ENCODE measurements at regions of chr6 and their contacts with region 1.

Region 1: DNA sequence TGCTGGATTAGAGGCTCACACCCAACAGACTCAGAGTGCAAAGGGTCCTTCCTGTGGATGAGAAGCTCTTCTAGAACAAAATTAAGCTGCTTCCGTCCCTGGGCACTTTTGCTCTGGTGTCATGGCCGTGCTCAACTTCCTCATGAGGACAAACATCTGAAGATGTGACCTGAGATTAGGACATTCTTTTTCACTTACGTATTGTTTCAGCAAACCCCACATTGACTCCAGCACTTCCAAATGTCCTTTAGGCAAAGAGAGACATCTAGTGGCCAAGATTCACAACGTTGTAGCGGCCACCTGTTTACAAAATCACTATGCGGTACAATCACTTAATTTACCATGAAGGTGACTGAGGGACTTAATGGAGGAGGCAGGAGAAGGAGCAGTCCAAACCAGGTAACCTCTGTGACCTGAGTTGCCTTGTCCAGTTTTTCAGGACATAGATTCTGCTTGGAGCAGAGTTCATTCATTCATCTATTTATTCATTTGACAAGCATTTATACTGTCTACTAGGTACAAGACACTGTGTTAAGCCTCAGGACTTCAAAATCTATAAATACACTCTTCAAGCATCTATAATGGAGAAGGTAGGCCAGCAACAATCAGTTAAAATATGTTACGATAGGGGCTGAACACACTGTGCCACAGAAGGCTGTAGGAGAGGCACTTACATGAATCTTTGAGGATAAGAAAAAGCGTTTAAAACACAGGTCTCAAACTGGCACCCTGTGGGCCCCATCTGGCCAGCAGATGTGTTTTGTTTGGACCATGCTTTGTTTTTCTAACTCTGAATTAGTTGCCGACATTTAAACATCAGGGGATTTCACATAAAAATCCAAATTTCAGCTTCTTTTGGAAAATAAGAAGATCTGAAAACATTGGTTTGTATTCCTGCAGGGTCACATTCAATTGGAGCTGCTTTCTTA is 5.6 kb upstream of the ADGRF1 start:
- DNase-seq: peak in 6 of 9 donors; percentile 0 to 19 (median 6)
- ATAC-seq: peak; percentile 56
- H3K4me3 ChIP-seq: no peak overlapping the region
- H3K4me3 Mint-ChIP-seq: no peak overlapping the region
- H3K27ac ChIP-seq: no peak overlapping the region
- H3K27ac Mint-ChIP-seq: no peak overlapping the region
- H3K4me1 ChIP-seq: no peaks in the 10 kb centered on the region
- H3K4me1 Mint-ChIP-seq: peaks cover 0 to 6% (median 0%) of the 10 kb centered on the region in 7 donors
- H3K27me3 ChIP-seq: no peaks in the 10 kb centered on the region
- H3K27me3 Mint-ChIP-seq: peaks cover 5 to 28% (median 11%) of the 10 kb centered on the region in 5 donors

Region 2: GRCh38 chr6:45930420-45931040 is 1117.2 kb before region 1 on chr6:
- CTCF ChIA-PET with region 1: no interaction called
- POLR2A ChIA-PET with region 1: no interaction called
- intact Hi-C with region 1: loop called in 1 of 2 experiments (anchors 10 kb)
- DNase-seq: peak in 8 of 9 donors; percentile 28 to 55 (median 43)
- ATAC-seq: peak; percentile 71
- H3K4me3 ChIP-seq: no peak overlapping the region
- H3K4me3 Mint-ChIP-seq: no peak overlapping the region
- H3K27ac ChIP-seq: no peak overlapping the region
- H3K27ac Mint-ChIP-seq: no peak overlapping the region
- H3K4me1 ChIP-seq: no peaks in the 10 kb centered on the region
- H3K4me1 Mint-ChIP-seq: peaks cover 0 to 5% (median 0%) of the 10 kb centered on the region in 7 donors
- H3K27me3 ChIP-seq: no peaks in the 10 kb centered on the region
- H3K27me3 Mint-ChIP-seq: peaks cover 0 to 5% (median 0%) of the 10 kb centered on the region in 5 donors

Region 3: DNA sequence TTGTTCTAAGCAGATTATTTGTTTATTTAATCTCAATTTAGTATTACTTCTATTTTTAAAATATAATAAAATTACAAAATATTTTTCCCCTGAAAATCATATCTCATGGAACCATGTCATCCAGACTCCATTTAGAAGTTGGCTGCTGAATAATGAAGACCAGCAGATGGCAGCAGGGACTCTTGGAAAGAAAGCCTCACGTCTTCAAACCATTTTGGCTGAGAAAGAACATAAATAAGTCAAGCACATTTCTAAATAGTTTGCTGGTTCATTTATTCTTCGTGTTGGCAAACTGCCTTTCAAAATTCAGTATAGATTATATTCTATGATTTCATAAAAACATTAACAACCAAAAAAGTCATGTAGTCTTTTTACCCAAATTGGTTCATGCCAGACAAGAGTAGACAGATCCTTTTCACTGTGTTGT is 628.2 kb before region 1 on chr6:
- CTCF ChIA-PET with region 1: no interaction called
- POLR2A ChIA-PET with region 1: no interaction called
- intact Hi-C with region 1: loop called in 1 of 2 experiments (anchors 5 kb)
- DNase-seq: peak in 1 of 9 donors; percentile 7
- ATAC-seq: no peak
- H3K4me3 ChIP-seq: no peak overlapping the region
- H3K4me3 Mint-ChIP-seq: no peak overlapping the region
- H3K27ac ChIP-seq: no peak overlapping the region
- H3K27ac Mint-ChIP-seq: no peak overlapping the region
- H3K4me1 ChIP-seq: no peaks in the 10 kb centered on the region
- H3K4me1 Mint-ChIP-seq: no peaks in the 10 kb centered on the region
- H3K27me3 ChIP-seq: no peaks in the 10 kb centered on the region
- H3K27me3 Mint-ChIP-seq: peaks cover 12 to 34% (median 18%) of the 10 kb centered on the region in 5 donors

Region 4: DNA sequence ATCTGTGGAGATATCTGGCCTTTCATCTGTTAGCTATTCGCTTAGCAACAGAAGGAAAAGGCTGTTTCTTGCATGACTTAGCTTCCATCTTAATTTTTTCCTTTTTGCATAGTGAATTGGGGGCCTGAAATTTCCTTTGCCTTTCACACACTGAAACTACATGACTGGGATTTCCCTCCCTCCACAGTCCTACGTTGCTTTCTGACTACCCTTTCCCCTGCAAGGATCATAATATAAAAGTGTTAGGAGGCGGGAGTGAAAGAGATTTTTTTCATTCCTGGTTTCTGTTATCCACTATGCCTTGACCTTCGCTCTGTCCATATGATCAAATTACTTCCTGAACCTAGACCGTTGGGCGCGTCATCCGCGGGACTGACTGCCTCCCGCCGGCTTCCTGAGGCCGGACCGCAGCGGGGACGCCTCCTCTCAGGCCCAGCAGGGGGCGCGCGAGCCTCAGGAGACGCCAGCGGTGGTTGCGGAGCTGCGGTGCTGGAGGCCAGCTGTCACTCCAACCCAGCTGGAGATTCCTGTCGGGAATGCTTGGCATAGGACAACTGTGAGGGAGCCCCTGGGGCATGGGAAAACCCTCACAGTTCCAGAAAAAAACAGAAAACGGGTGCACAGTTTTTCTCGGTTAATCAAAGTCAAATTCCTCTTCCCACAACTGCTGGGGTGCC is 198.9 kb before region 1 on chr6:
- CTCF ChIA-PET with region 1: no interaction called
- POLR2A ChIA-PET with region 1: no interaction called
- intact Hi-C with region 1: loop called (anchors 1 kb)
- DNase-seq: peak in 8 of 9 donors; percentile 18 to 72 (median 38)
- ATAC-seq: peak; percentile 87
- H3K4me3 ChIP-seq: no peak overlapping the region
- H3K4me3 Mint-ChIP-seq: peak overlapping the region in 7 of 10 donors; percentile 7 to 68 (median 58)
- H3K27ac ChIP-seq: no peak overlapping the region
- H3K27ac Mint-ChIP-seq: no peak overlapping the region
- H3K4me1 ChIP-seq: no peaks in the 10 kb centered on the region
- H3K4me1 Mint-ChIP-seq: peaks cover 4 to 7% (median 6%) of the 10 kb centered on the region in 7 donors
- H3K27me3 ChIP-seq: no peaks in the 10 kb centered on the region
- H3K27me3 Mint-ChIP-seq: peaks cover 13 to 33% (median 25%) of the 10 kb centered on the region in 5 donors

Region 5: GRCh38 chr6:47023573-47023972 is 24.2 kb before region 1 on chr6:
- CTCF ChIA-PET with region 1: no interaction called
- POLR2A ChIA-PET with region 1: no interaction called
- intact Hi-C with region 1: no loop called
- DNase-seq: no peak
- ATAC-seq: no peak
- H3K4me3 ChIP-seq: no peak overlapping the region
- H3K4me3 Mint-ChIP-seq: no peak overlapping the region
- H3K27ac ChIP-seq: no peak overlapping the region
- H3K27ac Mint-ChIP-seq: no peak overlapping the region
- H3K4me1 ChIP-seq: no peaks in the 10 kb centered on the region
- H3K4me1 Mint-ChIP-seq: peaks cover 0 to 1% (median 0%) of the 10 kb centered on the region in 7 donors
- H3K27me3 ChIP-seq: no peaks in the 10 kb centered on the region
- H3K27me3 Mint-ChIP-seq: peaks cover 0 to 10% (median 5%) of the 10 kb centered on the region in 5 donors